ENCODE measurements at regions of chr3 and their contacts with region 1.

Region 1: GRCh38 chr3:124905849-124906248 is 18.7 kb upstream of the ITGB5 start:
- DNase-seq: no peak
- H3K4me3 ChIP-seq: no peak overlapping the region
- H3K27ac ChIP-seq: no peak overlapping the region
- H3K4me1 ChIP-seq: peaks cover 6% of the 10 kb centered on the region
- H3K27me3 ChIP-seq: no peaks in the 10 kb centered on the region
- CTCF ChIP-seq: no peak

Region 2: GRCh38 chr3:124707656-124708062 is 198.2 kb before region 1 on chr3:
- intact Hi-C with region 1: no loop called
- DNase-seq: no peak
- H3K4me3 ChIP-seq: no peak overlapping the region
- H3K27ac ChIP-seq: no peak overlapping the region
- H3K4me1 ChIP-seq: no peaks in the 10 kb centered on the region
- H3K27me3 ChIP-seq: no peaks in the 10 kb centered on the region
- CTCF ChIP-seq: no peak

Region 3: DNA sequence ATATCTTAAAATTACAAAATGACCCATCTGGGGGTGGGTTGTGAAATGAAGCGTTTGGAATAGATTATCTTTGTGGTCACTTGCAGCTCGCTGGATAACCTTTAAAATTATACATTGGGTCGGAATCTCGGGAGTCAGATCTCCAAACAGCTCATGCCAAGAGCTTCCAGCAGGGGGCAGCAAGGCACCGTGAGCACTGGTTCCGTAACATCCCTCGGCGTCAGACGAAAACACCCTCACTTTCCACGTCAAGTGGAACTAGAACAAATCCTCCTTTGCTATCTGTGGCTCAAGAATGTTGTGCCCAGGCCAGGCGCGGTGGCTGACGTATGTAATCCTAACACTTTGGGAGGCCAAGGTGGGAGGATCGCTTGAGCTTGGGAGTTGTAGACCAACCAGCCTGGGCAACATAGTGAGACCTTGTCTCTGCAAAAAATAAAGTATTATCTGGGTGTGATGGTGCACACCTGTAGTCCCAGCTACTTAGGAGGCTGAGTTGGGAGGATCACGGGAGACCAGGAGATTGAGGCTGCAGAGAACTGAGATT is 144.5 kb before region 1 on chr3:
- intact Hi-C with region 1: loop called (anchors 2 kb)
- DNase-seq: peak; percentile 89
- H3K4me3 ChIP-seq: no peak overlapping the region
- H3K27ac ChIP-seq: peak overlapping the region; percentile 71
- H3K4me1 ChIP-seq: peaks cover 21% of the 10 kb centered on the region
- H3K27me3 ChIP-seq: no peaks in the 10 kb centered on the region
- CTCF ChIP-seq: peak; percentile 98

Measured in left ventricle myocardium inferior (tissue), 1 donor.